ENCODE measurements at regions of chr6 and their contacts with region 1.

Region 1: DNA sequence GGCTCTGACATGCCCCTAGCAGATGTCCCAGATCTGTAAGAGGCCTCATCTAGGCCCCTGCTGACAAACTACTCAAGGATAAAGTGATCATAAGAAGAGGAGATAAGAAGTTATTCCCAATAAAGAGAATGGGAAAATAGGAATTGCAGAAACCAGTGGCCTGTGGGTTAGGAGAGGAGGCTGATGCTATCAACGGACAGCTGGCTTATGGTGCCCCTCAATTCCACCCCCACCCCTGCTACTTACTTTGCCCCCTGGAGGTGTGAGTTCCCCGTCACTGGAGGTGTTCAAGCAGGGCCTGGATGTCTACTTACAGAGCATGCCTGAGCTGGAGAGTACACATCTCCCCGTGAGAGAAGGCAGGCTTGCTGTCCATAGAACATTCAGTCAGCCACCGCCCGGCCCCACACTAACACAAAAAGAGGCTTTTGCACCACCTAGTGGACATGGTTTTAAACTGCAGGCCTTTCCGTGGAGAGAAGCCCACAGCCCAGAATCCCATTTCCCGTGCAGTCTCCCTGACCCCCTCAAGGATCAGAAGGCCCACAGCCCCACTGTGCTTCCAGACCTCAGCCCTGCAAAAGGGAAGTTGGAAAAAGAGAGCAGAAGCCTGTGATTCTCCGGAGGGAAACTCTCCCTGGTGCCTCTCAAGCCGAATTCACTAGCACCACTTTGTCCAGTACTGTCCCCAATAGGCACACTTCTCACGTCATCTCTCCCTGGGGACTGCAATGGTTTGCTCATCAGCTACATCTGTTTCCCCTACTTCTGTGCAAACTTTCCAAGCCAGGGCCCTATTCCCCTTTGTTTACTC is 23.8 kb upstream of the BNIP5 start:
- DNase-seq: no peak
- H3K4me3 ChIP-seq: no peak overlapping the region
- H3K27ac ChIP-seq: no peak overlapping the region
- H3K4me1 ChIP-seq: no peaks in the 10 kb centered on the region
- H3K27me3 ChIP-seq: no peaks in the 10 kb centered on the region
- CTCF ChIP-seq: peak; percentile 74 to 83 (median 75)
- POLR2A ChIP-seq: no peak

Region 2: GRCh38 chr6:36302227-36302976 is 58.0 kb before region 1 on chr6:
- intact Hi-C with region 1: loop called (anchors 5 kb)
- DNase-seq: no peak
- H3K4me3 ChIP-seq: no peak overlapping the region
- H3K27ac ChIP-seq: no peak overlapping the region
- H3K4me1 ChIP-seq: no peaks in the 10 kb centered on the region
- H3K27me3 ChIP-seq: no peaks in the 10 kb centered on the region
- CTCF ChIP-seq: peak; percentile 89 to 96 (median 93)
- POLR2A ChIP-seq: no peak